ENCODE measurements at regions of chr12 and their contacts with region 1.

Region 1: GRCh38 chr12:57069523-57069922 is 9.1 kb downstream of the NEMP1 start:
- DNase-seq: peak; percentile 72
- ATAC-seq: peak; percentile 97
- H3K4me3 ChIP-seq: no peak overlapping the region
- H3K27ac ChIP-seq: no peak overlapping the region
- H3K4me1 ChIP-seq: 0 out of 4 replicates have a peak, but pooled peaks cover 0 to 3% of the 10 kb centered on the region in 2 experiments
- H3K27me3 ChIP-seq: no peaks in the 10 kb centered on the region
- CTCF ChIP-seq: peak; percentile 85 to 87 (median 86)
- POLR2A ChIP-seq: no peak
- RAD21 ChIP-seq: peak; percentile 96

Region 2: DNA sequence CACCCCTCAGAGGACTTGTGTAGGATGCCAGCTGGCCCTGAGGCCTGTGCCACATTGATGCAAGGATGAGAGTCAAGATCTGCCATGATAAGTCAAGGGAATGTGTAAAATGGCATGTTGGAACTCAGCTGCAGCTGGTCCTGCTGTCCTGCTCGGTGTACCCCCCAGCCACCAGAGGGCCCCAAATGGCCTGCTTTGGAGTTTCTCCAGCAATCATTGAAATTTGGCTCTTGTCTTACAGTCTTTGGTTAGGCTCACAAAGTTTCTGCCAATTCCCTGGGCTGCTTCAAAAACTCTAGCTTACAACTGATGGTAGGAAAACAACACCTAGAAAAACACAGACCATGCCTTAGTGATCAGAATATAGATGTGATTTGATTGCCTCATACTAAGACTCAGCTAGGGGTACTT is 229.6 kb before region 1 on chr12:
- CTCF ChIA-PET with region 1: no interaction called
- POLR2A ChIA-PET with region 1: no interaction called
- RAD21 ChIA-PET with region 1: no interaction called
- intact Hi-C with region 1: loop called (anchors 10 kb)
- DNase-seq: peak; percentile 48
- ATAC-seq: peak; percentile 87
- H3K4me3 ChIP-seq: no peak overlapping the region
- H3K27ac ChIP-seq: no peak overlapping the region
- H3K4me1 ChIP-seq: peaks cover 0 to 13% of the 10 kb centered on the region in 2 experiments; a peak in 1 of 4 replicates
- H3K27me3 ChIP-seq: no peaks in the 10 kb centered on the region
- CTCF ChIP-seq: peak; percentile 79 to 91 (median 82)
- POLR2A ChIP-seq: no peak
- RAD21 ChIP-seq: peak; percentile 94

Region 3: DNA sequence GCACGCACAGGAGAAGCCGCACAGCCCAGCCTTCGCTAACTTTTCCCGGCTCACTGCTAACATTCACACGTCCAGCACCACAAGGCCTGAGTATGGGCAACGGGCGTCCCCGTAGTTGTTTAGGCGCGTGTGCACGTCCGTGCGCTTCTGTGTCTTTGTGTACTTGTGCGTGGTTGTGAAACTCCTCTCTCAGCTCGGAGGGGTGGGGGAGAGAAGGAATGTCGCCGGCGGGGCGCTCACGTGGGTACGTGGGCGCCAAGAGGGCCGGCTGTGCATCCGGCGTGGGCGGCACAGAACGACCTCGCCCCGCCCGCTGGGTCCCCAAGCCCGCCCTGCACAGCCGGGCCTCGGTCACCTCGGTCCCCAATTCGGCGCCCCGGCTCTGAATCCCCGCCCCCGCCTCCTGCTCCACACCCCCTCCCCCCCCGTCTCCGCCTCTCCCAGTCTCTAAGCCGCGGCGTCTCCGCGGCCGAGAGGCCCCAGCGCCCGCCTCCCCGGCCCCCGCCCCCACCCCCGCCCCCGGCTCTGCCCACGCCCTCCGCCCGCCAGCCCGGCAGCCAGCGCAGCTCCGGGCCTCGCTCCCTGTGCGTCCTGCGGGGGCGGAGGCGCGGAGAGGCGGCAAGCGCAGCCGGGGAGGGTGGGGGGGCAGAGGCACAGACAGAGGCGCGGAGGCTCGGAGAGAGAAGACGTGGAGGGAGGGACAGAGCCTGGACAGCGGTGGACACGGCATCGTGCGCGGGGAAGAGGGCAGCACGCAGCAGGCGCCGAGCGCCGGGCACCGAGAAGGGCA is 19.1 kb after region 1 on chr12 and contains the start of gene NAB2:
- CTCF ChIA-PET with region 1: interaction called, 22 read pairs
- POLR2A ChIA-PET with region 1: interaction called, 6 read pairs
- RAD21 ChIA-PET with region 1: interaction called in 1 of 2 experiments, 4 read pairs
- intact Hi-C with region 1: loop called (anchors 1 kb)
- DNase-seq: peak; percentile 85
- ATAC-seq: peak; percentile 71
- H3K4me3 ChIP-seq: peak within 1 kb of the TSS; percentile 61 to 90
- H3K27ac ChIP-seq: peak within 1 kb of the TSS; percentile 100
- H3K4me1 ChIP-seq: peaks cover 38 to 70% of the 10 kb centered on the region in 2 experiments
- H3K27me3 ChIP-seq: no peaks in the 10 kb centered on the region
- CTCF ChIP-seq: no peak
- POLR2A ChIP-seq: peak; percentile 20
- RAD21 ChIP-seq: no peak
- total RNA-seq, gene NAB2: 77.1 TPM

Region 4: GRCh38 chr12:57111031-57111734 is 41.7 kb after region 1 on chr12 and contains the start of gene STAT6:
- CTCF ChIA-PET with region 1: interaction called, 181 read pairs
- POLR2A ChIA-PET with region 1: interaction called, 55 read pairs
- RAD21 ChIA-PET with region 1: interaction called, 36 to 60 read pairs
- intact Hi-C with region 1: loop called (anchors 1 kb)
- DNase-seq: no peak
- ATAC-seq: peak; percentile 60
- H3K4me3 ChIP-seq: peak within 1 kb of the TSS; percentile 80 to 81
- H3K27ac ChIP-seq: peak within 1 kb of the TSS; percentile 91
- H3K4me1 ChIP-seq: peaks cover 11 to 36% of the 10 kb centered on the region in 2 experiments
- H3K27me3 ChIP-seq: no peaks in the 10 kb centered on the region
- CTCF ChIP-seq: no peak; a peak in 1 of 6 replicates
- POLR2A ChIP-seq: no peak
- RAD21 ChIP-seq: no peak
- total RNA-seq, gene STAT6: 78.5 TPM

Region 5: DNA sequence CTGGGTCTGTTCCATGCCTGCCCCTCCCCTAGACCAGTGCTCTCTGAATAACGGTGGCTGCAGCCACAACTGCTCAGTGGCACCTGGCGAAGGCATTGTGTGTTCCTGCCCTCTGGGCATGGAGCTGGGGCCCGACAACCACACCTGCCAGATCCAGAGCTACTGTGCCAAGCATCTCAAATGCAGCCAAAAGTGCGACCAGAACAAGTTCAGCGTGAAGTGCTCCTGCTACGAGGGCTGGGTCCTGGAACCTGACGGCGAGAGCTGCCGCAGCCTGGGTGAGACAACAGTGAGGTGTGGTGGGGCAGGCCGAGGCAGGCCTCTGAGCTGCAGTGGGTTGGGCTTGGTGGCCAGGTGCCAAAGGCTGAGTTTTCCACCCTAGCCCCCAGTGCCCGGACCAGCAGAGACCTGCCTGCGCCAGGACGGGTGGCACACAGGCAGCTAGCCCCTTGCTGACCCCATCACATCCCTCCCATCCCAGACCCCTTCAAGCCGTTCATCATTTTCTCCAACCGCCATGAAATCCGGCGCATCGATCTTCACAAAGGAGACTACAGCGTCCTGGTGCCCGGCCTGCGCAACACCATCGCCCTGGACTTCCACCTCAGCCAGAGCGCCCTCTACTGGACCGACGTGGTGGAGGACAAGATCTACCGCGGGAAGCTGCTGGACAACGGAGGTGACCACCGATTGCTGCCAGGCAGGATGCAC is 106.1 kb after region 1 on chr12:
- CTCF ChIA-PET with region 1: interaction called, 23 read pairs
- POLR2A ChIA-PET with region 1: no interaction called
- RAD21 ChIA-PET with region 1: no interaction called
- intact Hi-C with region 1: no loop called
- DNase-seq: peak; percentile 73
- ATAC-seq: peak; percentile 90
- H3K4me3 ChIP-seq: peak overlapping the region in 1 of 2 experiments; percentile 29; a peak in 2 of 4 replicates
- H3K27ac ChIP-seq: peak overlapping the region; percentile 61
- H3K4me1 ChIP-seq: peaks cover 18 to 28% of the 10 kb centered on the region in 2 experiments
- H3K27me3 ChIP-seq: no peaks in the 10 kb centered on the region
- CTCF ChIP-seq: peak; percentile 83 to 87 (median 86)
- POLR2A ChIP-seq: no peak
- RAD21 ChIP-seq: peak; percentile 75

Region 6: DNA sequence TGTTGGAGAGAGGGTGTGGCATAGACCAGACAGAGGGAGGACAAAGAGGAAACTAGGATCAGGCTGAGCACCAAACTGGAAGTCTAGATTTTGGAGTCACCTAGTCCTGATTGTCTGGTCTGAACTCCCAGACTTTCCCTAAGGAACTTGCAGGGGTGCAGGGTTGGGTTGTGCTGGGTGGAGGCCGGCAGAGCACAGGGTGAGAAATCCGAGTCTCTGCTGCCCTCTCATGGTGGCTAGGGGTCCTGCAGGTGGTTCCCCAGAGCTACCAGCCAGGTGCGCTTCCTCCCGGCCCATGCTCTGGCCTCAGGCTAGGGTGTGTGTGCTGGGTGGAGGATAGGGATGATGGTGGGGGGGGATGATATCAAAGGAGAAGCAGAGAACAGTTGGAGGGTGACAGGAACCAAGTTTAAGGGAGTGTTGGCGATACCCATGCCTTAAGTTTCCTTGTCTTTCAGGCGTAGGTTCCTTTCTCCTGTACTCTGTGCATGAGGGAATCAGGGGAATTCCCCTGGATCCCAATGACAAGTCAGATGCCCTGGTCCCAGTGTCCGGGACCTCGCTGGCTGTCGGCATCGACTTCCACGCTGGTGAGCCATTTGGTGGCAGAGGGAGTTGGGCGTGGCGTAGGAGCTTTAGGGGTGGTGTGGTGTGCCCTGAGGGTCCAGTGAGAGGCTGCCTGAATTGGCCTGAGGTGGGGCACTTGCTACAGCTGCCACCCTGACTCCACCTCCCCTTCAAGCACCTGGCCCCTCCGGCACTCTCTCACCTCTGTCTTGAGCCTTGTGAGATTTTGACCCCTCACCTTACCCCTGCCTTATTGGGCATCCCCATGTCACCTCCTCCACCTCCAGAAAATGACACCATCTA is 113.6 kb after region 1 on chr12:
- CTCF ChIA-PET with region 1: interaction called, 19 read pairs
- POLR2A ChIA-PET with region 1: no interaction called
- RAD21 ChIA-PET with region 1: interaction called, 5 read pairs
- intact Hi-C with region 1: loop called (anchors 1 kb)
- DNase-seq: peak; percentile 31
- ATAC-seq: peak; percentile 99
- H3K4me3 ChIP-seq: no peak overlapping the region
- H3K27ac ChIP-seq: no peak overlapping the region
- H3K4me1 ChIP-seq: peaks cover 0 to 8% of the 10 kb centered on the region in 2 experiments; a peak in 3 of 4 replicates
- H3K27me3 ChIP-seq: no peaks in the 10 kb centered on the region
- CTCF ChIP-seq: peak; percentile 91 to 93 (median 93)
- POLR2A ChIP-seq: no peak
- RAD21 ChIP-seq: peak; percentile 93